GM13977 (cell line): ENCODE measurements at regions of chr1 and their contacts with region 1.

Region 1: GRCh38 chr1:70509996-70510876 is 99.2 kb downstream of the CTH start:
- DNase-seq: peak; percentile 57
- CTCF ChIP-seq: peak; percentile 71

Region 2: DNA sequence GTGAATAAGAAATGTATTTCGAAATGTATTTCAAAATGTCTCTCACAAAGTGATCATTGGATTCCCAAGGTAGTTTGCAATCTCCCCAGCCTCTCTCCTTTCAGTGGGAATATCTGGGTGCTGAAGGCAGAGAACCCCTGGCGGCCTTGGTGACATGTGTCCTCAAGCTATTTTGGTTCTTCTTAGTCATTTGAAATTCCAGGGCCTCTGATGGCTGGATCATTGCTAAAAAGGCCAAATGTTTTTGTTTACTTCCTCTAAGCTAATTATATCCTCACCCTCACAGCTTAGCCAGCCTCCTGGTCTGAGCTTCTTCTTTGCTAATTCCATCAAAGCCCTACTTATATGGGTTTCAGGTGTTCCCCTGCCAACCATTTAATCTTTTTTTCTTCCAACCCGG is 376.1 kb before region 1 on chr1:
- in situ Hi-C with region 1: loop called (anchors 10 kb)
- DNase-seq: no peak
- CTCF ChIP-seq: no peak